ENCODE measurements at regions of chr2 and their contacts with region 1.

Region 1: DNA sequence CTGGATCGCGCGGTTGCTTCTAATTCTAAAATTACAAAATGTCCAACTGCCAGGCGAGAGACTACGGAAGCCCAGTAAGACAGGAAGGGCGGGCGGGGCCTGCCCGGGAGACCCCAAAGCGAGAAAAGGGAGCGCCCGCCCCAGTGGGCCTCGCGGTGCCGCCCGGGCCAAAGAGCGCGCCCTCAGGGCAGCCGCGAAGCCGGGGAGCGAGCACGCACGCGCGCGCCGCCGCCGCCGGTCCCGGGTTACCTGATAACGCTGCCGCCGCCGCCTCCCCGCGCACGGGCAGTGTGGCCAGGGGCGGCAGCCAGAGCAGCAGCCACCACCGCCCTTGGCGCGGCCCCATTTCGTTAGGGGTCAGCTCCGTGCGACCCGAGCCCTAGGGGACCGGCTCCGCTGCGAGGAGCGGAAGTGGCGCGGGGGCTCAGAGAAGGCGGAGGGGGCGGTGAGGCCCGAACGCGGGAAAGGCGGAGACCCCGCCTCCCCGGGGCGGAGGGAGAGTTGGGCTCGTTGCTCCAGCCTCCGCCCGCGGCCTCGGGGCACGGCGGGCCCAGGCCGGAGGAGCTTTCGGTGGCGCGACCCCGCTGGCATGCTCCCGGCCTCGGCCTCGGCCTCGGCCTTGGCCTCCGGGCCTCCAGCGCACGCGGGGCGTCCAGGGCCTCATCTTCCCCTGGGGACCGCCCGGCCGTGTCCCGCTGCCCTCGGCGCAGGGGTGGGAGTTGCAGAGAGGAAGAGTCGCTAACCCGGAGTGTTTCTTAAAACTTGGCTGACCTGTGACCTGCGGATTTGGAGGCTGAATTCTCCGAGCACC is at the start of gene NEMP2:
- DNase-seq: peak; percentile 72 to 93 (median 87)
- H3K4me3 ChIP-seq: peak within 1 kb of the TSS; percentile 92
- H3K4me3 Mint-ChIP-seq: peak within 1 kb of the TSS; percentile 95 to 99 (median 98)
- H3K27ac ChIP-seq: peak within 1 kb of the TSS; percentile 93
- H3K27ac Mint-ChIP-seq: peak within 1 kb of the TSS; percentile 99 to 100 (median 100)
- H3K4me1 ChIP-seq: peaks cover 51% of the 10 kb centered on the region
- H3K4me1 Mint-ChIP-seq: peaks cover 37 to 68% (median 63%) of the 10 kb centered on the region in 3 donors
- H3K27me3 ChIP-seq: no peaks in the 10 kb centered on the region
- H3K27me3 Mint-ChIP-seq: no peaks in the 10 kb centered on the region
- total RNA-seq, gene NEMP2: 16.9 to 17.5 TPM

Region 2: DNA sequence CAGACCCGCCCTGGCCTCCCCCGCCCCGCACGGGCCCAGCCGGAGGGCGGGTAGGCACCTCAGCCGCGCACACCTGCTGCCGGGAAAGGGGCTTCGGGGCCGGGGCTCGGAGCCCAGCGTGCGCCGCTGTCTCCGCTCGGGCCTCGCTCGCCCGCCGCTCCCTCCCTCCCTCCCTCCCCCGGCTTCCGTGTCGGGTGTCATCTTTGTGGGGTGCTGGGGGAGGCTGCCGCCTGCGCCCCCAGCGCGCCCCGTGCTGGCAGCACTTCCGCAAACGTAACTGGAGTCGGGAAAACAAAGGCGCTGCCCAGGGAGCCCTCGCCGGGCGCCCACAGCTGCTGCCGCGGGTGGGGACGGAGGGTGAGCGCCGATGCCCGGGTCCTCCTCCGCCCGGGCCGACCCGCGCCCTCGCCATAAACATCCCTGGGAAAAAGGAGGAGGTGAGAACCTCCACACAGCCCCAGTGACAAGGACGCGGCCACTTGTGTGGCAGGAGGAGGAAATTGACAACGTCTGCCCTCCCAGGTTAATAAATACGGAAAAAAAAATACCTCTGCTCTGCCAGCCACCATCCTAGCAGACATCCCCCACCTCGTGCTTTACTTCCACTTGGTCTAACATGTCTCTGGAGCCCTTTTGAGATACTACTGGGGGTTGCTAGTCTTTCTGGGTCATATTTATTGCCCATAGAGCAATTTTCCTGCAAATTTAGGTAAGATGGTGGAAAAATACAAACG is 125.8 kb before region 1 on chr2:
- CTCF ChIA-PET with region 1: no interaction called
- POLR2A ChIA-PET with region 1: interaction called, 31 read pairs
- DNase-seq: peak; percentile 71 to 91 (median 85)
- H3K4me3 ChIP-seq: peak overlapping the region; percentile 61
- H3K4me3 Mint-ChIP-seq: peak overlapping the region; percentile 88 to 95 (median 93)
- H3K27ac ChIP-seq: peak overlapping the region; percentile 97
- H3K27ac Mint-ChIP-seq: peak overlapping the region; percentile 97 to 99 (median 98)
- H3K4me1 ChIP-seq: peaks cover 56% of the 10 kb centered on the region
- H3K4me1 Mint-ChIP-seq: peaks cover 44 to 49% (median 46%) of the 10 kb centered on the region in 3 donors
- H3K27me3 ChIP-seq: no peaks in the 10 kb centered on the region
- H3K27me3 Mint-ChIP-seq: peaks cover 0 to 5% of the 10 kb centered on the region in 2 donors